Activated T-helper 1 cell treated with anti-CD3 and anti-CD28 coated beads, Interleukin-12 subunit alpha, Interleukin-12 subunit beta, Interleukin-2, Interleukin-4 antibody, amounts not matched to agents 30 ng/mL and 10 ng/mL and 1 ng/mL, durations not matched to agents 14 hours and 24 hours and 36 hours (primary cell): ENCODE measurements at regions of chr16 and their contacts with region 1.

Region 1: GRCh38 chr16:53703590-53704444 is at the starts of genes FTO and RPGRIP1L:
- DNase-seq: peak; percentile 96
- H3K4me3 Mint-ChIP-seq: peak within 1 kb of the TSS; percentile 96
- H3K27ac Mint-ChIP-seq: peak within 1 kb of the TSS; percentile 91
- H3K4me1 Mint-ChIP-seq: peaks cover 36% of the 10 kb centered on the region
- H3K27me3 Mint-ChIP-seq: no peaks in the 10 kb centered on the region
- total RNA-seq, gene FTO: 56.4 and 63.0 TPM in 2 replicates
- total RNA-seq, gene RPGRIP1L: 9.3 and 10.9 TPM in 2 replicates

Region 2: GRCh38 chr16:53130159-53131049 is 573.4 kb before region 1 on chr16:
- intact Hi-C with region 1: loop called (anchors 2 kb)
- DNase-seq: peak; percentile 92
- H3K4me3 Mint-ChIP-seq: peak overlapping the region; percentile 80
- H3K27ac Mint-ChIP-seq: peak overlapping the region; percentile 79
- H3K4me1 Mint-ChIP-seq: peaks cover 6% of the 10 kb centered on the region
- H3K27me3 Mint-ChIP-seq: peaks cover 9% of the 10 kb centered on the region

Region 3: GRCh38 chr16:53435066-53435688 is 268.6 kb before region 1 on chr16:
- intact Hi-C with region 1: loop called (anchors 1 kb)
- DNase-seq: peak; percentile 63
- H3K4me3 Mint-ChIP-seq: peak overlapping the region; percentile 99
- H3K27ac Mint-ChIP-seq: peak overlapping the region; percentile 98
- H3K4me1 Mint-ChIP-seq: peaks cover 38% of the 10 kb centered on the region
- H3K27me3 Mint-ChIP-seq: no peaks in the 10 kb centered on the region

Region 4: DNA sequence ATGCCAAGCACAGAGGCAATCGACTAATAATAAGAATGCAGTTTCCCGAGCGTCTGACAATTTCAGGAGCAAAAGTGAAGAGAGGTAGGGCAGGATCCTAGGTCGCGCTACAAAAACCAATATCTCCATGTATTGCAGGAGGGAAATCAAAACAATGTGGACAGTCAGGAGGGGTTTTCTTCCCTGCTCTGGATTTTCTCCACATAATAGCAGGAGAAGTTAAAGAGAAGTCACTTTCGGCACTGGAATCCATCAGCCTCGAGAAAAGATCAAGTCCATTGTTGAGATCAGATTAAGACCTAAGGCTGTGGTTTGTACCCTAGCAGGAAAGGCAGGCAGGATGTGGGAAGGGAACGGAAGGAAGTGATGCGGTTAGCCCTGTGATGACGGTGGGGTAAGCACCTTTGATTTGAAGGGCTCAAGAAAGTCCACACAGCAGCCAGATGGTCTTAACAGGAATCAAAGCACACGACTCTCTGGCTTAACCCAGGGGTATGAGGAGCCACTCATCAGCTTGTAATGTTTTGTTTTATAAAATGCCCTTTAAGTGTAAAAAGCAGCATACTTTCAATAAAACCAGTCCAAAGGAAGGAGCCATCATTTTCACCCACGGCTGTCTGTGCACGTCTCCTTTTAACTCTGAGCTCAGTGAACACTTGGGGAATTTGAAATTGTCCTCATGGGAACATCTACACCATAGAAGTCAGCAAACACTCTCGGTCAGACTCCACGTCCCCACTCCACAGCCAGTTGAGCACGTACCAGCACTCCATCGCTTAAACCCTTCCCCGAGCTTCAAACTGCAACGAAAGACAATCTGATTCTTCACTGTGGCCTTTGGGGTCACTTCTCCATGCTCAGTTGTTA is 185.0 kb before region 1 on chr16:
- intact Hi-C with region 1: loop called (anchors 5 kb)
- DNase-seq: peak; percentile 83
- H3K4me3 Mint-ChIP-seq: peak overlapping the region; percentile 63
- H3K27ac Mint-ChIP-seq: peak overlapping the region; percentile 82
- H3K4me1 Mint-ChIP-seq: peaks cover 58% of the 10 kb centered on the region
- H3K27me3 Mint-ChIP-seq: peaks cover 2% of the 10 kb centered on the region

Region 5: GRCh38 chr16:53743149-53743566 is 39.3 kb after region 1 on chr16:
- intact Hi-C with region 1: loop called (anchors 2 kb)
- DNase-seq: no peak
- H3K4me3 Mint-ChIP-seq: no peak overlapping the region
- H3K27ac Mint-ChIP-seq: no peak overlapping the region
- H3K4me1 Mint-ChIP-seq: peaks cover 31% of the 10 kb centered on the region
- H3K27me3 Mint-ChIP-seq: no peaks in the 10 kb centered on the region

Region 6: DNA sequence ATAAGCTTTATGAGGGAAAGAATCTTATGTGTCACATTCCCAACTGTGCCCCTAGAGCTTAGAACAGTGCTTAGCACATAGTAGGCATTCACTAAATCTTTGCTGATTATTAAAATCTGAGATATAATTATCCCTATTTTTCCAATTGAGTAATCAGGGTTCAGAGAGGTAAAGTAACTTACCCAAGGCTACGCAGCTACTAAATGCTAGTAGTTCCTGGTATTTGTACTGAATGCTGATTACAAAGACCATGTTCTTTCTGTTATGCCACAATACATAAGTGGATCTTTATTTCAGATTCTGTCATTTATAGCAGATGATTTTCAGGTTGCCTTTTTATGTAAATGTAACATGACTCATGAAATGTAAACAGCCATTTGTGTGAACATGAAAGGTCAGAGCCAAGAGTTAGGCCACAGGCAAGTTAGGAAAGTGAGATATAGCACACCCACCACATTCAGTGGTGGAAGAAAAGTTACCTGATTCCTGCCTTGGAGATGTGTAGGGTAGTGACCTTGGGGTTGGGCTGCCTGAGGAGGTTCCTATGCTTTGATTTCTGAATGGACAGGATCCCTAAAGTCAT is 77.3 kb after region 1 on chr16:
- intact Hi-C with region 1: no loop called
- DNase-seq: no peak
- H3K4me3 Mint-ChIP-seq: no peak overlapping the region
- H3K27ac Mint-ChIP-seq: no peak overlapping the region
- H3K4me1 Mint-ChIP-seq: peaks cover 21% of the 10 kb centered on the region
- H3K27me3 Mint-ChIP-seq: no peaks in the 10 kb centered on the region

Region 7: DNA sequence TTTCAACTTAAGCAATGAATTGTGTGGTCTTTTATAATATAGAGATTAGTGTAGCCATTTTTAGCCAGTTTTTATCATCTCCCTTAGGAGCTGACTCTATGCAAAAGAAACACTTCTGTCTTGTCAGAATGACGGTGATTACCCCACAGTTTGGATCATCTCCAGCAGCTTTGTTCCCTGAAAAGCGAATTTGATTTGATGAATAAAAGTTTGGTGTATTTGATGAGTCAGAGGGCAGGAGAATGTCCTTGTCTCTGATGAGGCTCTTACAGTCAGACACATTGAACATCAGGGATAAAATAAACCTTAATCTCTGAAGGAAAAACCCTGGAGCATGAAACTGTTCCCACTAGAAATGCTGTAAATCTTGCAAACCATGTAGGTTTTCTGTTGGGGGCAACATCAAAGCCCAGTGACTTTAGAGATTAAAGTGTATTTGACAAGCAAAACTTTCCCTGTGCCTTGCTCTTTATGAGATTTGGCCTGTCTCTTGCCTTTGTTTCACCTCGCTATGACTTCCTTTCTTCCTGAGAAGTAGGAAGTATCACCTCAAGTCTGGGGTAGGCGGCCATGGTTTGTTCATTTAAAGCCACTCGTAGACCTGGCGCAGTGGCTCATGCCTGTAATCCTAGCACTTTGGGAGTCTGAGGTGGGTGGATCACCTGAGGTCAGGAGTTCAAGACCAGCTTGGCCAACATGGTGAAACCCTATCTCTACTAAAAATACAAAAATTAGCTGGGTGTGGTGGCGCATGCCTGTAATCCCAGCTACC is 209.5 kb after region 1 on chr16:
- intact Hi-C with region 1: loop called (anchors 1 kb)
- DNase-seq: peak; percentile 4
- H3K4me3 Mint-ChIP-seq: peak overlapping the region; percentile 46
- H3K27ac Mint-ChIP-seq: peak overlapping the region; percentile 82
- H3K4me1 Mint-ChIP-seq: peaks cover 8% of the 10 kb centered on the region
- H3K27me3 Mint-ChIP-seq: no peaks in the 10 kb centered on the region